Activated CD4-positive, alpha-beta memory T cell treated with anti-CD3 and anti-CD28 coated beads for 36 hours (primary cell): ENCODE measurements at regions of chr1 and their contacts with region 1.

Region 1: GRCh38 chr1:151156515-151156819 is at the start of gene TNFAIP8L2:
- DNase-seq: peak; percentile 91
- H3K4me3 Mint-ChIP-seq: peak within 1 kb of the TSS; percentile 97
- H3K27ac Mint-ChIP-seq: peak within 1 kb of the TSS; percentile 97
- H3K4me1 Mint-ChIP-seq: peaks cover 38% of the 10 kb centered on the region
- H3K27me3 Mint-ChIP-seq: no peaks in the 10 kb centered on the region
- total RNA-seq, gene TNFAIP8L2: 24.2 to 26.7 TPM

Region 2: GRCh38 chr1:150613061-150613920 is 543.2 kb before region 1 on chr1:
- CTCF ChIA-PET with region 1: no interaction called
- POLR2A ChIA-PET with region 1: no interaction called
- intact Hi-C with region 1: loop called (anchors 5 kb)
- DNase-seq: peak; percentile 75
- H3K4me3 Mint-ChIP-seq: peak overlapping the region; percentile 62
- H3K27ac Mint-ChIP-seq: peak overlapping the region; percentile 97
- H3K4me1 Mint-ChIP-seq: peaks cover 66% of the 10 kb centered on the region
- H3K27me3 Mint-ChIP-seq: no peaks in the 10 kb centered on the region

Region 3: GRCh38 chr1:151024540-151025146 is 131.8 kb before region 1 on chr1:
- CTCF ChIA-PET with region 1: interaction called, 46 read pairs
- POLR2A ChIA-PET with region 1: no interaction called
- intact Hi-C with region 1: loop called (anchors 1 kb)
- DNase-seq: peak; percentile 88
- H3K4me3 Mint-ChIP-seq: no peak overlapping the region
- H3K27ac Mint-ChIP-seq: peak overlapping the region; percentile 42
- H3K4me1 Mint-ChIP-seq: peaks cover 5% of the 10 kb centered on the region
- H3K27me3 Mint-ChIP-seq: no peaks in the 10 kb centered on the region

Region 4: DNA sequence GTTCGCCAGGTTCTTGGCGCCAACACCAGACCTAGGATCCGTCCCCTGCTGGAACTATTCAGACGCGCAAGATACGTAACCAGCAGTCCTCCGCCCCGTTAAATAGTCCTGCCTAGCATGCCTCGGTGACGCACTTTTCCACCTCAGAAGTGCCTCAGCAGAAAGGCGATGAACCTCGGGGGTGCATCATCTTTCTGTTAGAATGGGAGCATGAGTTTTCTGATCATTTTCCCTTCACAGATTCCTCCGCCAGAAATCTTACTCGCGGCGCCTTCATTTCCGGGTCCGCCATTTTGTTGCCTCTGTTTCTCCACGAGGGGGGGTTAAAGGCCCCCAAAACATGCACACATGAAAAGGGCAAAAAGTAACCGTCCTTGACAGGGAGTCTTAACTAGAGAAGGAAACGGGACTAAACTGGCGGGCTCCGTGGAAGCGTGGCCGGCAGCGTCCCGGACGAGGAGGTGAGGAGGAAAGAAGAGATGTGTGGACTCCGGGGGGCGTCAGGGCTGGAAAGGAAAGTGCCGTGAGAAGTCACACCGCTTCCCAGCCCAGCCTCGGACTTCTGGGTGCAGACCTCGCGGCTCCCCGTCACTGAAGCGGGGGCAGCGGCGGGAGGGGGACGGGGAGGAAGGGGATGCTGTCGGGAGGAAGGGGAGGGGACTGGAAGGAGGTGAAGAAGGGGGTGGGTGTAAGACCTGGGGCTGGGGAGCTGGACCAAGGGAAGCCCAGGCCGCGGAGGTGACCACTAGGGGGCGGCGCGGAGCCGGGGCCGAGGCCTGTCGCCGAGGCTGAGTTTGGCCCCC is 85.8 kb before region 1 on chr1 and contains the start of gene GABPB2:
- CTCF ChIA-PET with region 1: interaction called, 28 read pairs
- POLR2A ChIA-PET with region 1: interaction called, 5 read pairs
- intact Hi-C with region 1: loop called (anchors 1 kb)
- DNase-seq: peak; percentile 93
- H3K4me3 Mint-ChIP-seq: peak within 1 kb of the TSS; percentile 94
- H3K27ac Mint-ChIP-seq: peak within 1 kb of the TSS; percentile 100
- H3K4me1 Mint-ChIP-seq: peaks cover 15% of the 10 kb centered on the region
- H3K27me3 Mint-ChIP-seq: no peaks in the 10 kb centered on the region
- total RNA-seq, gene GABPB2: 13.6 to 14.9 TPM

Region 5: DNA sequence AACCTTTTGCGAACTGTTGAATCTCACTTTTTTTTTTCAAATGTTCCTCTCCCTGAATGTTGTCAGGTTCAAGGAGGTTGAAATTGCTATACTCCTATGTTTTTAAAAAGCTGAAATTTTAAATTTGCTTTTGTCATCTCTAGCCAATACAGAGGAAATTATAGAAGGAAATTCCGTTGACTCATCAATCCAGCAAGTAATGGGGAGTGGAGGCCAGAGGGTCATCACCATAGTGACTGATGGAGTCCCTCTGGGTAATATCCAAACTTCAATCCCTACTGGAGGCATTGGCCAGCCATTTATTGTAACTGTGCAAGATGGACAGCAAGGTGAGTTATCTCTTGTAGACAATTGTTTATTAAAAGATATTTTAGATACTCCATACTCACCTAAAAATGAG is 49.6 kb before region 1 on chr1:
- CTCF ChIA-PET with region 1: interaction called, 298 read pairs
- POLR2A ChIA-PET with region 1: no interaction called
- intact Hi-C with region 1: no loop called
- DNase-seq: no peak
- H3K4me3 Mint-ChIP-seq: no peak overlapping the region
- H3K27ac Mint-ChIP-seq: no peak overlapping the region
- H3K4me1 Mint-ChIP-seq: no peaks in the 10 kb centered on the region
- H3K27me3 Mint-ChIP-seq: no peaks in the 10 kb centered on the region

Region 6: DNA sequence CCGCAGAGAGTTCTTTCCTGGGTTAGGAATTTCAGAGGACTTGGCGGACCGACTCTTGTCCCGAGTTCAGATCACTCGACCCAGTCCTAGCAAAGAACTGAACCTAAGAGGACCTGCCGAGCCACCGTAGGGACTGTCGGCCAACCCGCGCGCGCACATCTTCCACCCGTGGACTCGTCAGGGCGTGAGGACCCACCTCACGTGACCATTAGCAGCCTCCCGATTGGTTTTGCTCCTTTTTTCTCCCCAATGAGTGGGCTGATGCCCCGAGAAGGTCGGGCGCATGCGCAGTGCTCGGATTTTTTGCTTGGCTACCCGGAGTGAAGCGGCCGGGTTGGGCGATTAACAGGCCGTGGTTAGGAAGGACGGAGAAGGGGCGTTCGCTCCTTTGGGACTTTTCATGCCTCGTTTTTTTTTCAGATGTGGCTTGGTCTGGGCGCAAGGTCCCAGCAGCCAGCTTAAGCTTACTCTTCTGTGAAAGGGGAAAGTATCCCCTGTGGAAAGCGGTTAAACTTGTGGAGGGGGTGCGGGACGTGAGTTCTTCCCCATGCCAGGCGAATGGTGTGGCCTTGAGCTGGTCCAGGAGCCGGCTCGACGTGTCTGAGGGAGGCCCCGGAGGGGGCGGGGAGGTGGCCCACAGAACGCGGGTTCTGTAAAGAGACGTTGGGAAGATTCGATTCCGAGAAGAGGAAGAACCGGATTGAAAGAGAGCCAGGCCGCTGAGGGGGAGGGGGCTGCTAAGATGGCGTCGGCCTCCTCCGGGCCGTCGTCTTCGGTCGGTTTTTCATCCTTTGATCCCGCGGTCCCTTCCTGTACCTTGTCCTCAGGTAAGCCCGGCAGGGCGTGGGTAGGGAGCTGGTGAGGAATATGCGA is 42.0 kb after region 1 on chr1 and contains the start of gene PIP5K1A:
- CTCF ChIA-PET with region 1: interaction called, 4 read pairs
- POLR2A ChIA-PET with region 1: no interaction called
- intact Hi-C with region 1: loop called (anchors 5 kb)
- DNase-seq: peak; percentile 99
- H3K4me3 Mint-ChIP-seq: peak within 1 kb of the TSS; percentile 99
- H3K27ac Mint-ChIP-seq: peak within 1 kb of the TSS; percentile 96
- H3K4me1 Mint-ChIP-seq: peaks cover 37% of the 10 kb centered on the region
- H3K27me3 Mint-ChIP-seq: no peaks in the 10 kb centered on the region
- total RNA-seq, gene PIP5K1A: 78.6 to 84.3 TPM

Region 7: DNA sequence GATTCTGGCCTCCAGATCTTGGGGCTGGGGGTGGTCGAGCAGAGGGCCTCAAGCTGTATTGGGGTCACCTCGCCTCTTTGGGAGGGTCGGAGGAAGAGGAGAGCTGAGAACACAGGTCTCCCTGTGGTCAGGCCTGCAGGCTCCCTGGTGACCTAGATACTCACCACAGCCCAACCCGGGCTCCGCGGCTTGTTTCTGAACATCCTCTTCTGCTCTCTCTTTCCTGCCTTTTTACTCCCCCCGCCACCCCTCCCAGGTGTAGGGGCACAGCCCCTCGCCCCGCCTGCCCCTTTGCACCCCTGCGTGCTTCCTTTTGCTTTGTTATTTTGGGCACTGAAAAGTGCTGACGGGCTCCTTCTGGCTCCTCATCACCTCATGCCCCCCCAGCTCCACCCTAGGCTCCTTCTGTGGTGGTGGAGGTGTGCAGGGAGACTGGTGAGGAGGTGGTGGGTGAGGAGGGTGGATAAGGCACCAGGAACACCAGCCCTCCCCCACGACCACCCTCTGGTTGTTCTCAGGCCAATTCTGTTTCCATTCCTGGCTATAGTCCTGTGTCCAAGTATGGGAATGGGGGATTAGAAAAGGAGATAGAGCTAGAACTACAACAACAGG is 659.4 kb after region 1 on chr1:
- CTCF ChIA-PET with region 1: no interaction called
- POLR2A ChIA-PET with region 1: no interaction called
- intact Hi-C with region 1: no loop called
- DNase-seq: peak; percentile 55
- H3K4me3 Mint-ChIP-seq: no peak overlapping the region
- H3K27ac Mint-ChIP-seq: peak overlapping the region; percentile 44
- H3K4me1 Mint-ChIP-seq: peaks cover 57% of the 10 kb centered on the region
- H3K27me3 Mint-ChIP-seq: no peaks in the 10 kb centered on the region